Mammary epithelial cell (primary cell): ENCODE measurements at regions of chr1 and their contacts with region 1.

Region 1: GRCh38 chr1:216140730-216141524 is 282.3 kb downstream of the USH2A start:
- DNase-seq: no peak
- H3K4me3 ChIP-seq: no peak overlapping the region
- H3K27ac ChIP-seq: no peak overlapping the region
- H3K4me1 ChIP-seq: no peaks in the 10 kb centered on the region
- H3K27me3 ChIP-seq: no peaks in the 10 kb centered on the region
- CTCF ChIP-seq: no peak

Region 2: DNA sequence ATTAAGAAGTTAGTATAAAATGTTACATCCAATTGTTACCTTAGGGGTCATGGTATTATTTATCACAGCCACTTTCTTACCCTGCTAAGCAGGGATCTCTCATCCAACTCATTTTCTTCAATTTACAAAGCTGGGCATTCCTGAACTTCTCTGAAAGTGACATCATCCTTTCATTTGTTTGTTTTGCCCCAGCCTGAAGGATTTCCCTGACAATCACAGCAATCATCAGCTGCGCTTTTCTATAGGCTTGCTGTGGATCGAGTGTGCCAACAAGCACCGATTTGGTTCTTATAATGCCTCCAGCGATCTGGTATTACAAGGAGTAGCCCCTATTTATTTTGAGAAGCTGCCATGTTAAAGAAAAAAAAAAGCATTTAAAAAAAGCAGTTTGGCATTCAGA is 42.1 kb after region 1 on chr1:
- CTCF ChIA-PET with region 1: no interaction called
- dilution Hi-C with region 1: loop called (anchors 10 kb)
- in situ Hi-C with region 1: no loop called
- intact Hi-C with region 1: no loop called
- DNase-seq: no peak
- H3K4me3 ChIP-seq: no peak overlapping the region
- H3K27ac ChIP-seq: no peak overlapping the region
- H3K4me1 ChIP-seq: no peaks in the 10 kb centered on the region
- H3K27me3 ChIP-seq: peaks cover 5% of the 10 kb centered on the region
- CTCF ChIP-seq: no peak